KBM-7 (cell line): ENCODE measurements at regions of chr3 and their contacts with region 1.

Region 1: DNA sequence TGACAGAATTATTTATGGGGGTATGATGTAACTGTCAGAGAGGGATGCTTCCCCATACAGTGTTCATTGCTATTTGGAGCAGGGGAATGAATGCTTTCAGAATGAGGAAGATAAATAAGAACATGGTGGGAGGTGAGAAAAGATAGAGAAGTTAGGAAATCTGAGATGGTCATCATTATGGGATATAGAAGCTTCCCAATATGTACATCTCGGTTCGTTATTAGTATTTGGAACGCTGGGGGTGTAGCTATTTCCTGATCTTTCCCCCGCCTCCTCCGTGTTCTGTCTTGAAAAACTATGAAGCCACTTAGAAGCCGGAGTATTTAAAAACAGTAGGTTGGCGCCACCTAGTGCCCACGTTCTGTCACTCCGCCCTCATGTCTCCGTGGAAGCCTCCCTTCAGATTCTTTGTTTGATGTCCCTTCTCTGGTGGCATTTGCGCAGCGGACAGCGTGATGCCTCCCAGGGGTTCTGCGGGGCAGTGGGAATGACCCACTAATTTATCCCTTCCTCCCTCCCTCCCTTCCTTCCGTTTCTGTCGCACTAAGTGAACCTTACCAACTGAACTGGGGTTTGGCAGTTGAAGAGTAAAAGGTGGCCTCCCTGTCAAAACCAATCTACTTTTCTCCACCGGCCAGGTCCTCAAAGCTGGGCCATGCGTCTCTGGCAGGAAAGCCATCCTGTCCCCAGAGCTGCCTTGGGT is 184.5 kb downstream of the FEZF2 start:
- DNase-seq: peak; percentile 82

Region 2: DNA sequence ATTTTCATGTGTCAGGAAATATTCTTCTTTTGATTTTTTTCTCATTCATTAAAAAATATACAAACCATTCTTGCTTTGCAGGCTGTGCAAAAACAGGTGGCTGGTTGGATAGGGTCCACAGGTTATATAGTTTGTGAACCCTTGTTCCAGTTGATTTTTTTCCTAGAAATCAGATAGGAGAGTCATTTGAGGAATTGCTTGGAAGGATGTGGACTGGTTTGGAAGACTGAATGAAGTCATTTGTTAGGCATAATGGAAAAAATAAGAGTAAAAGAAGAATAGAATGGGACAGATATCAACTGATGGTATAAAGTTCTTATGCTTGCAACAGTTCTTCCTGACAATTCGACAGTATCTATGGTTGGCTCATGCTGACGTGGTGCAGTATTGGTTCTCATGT is 438.1 kb before region 1 on chr3:
- in situ Hi-C with region 1: no loop called
- DNase-seq: no peak

Region 3: DNA sequence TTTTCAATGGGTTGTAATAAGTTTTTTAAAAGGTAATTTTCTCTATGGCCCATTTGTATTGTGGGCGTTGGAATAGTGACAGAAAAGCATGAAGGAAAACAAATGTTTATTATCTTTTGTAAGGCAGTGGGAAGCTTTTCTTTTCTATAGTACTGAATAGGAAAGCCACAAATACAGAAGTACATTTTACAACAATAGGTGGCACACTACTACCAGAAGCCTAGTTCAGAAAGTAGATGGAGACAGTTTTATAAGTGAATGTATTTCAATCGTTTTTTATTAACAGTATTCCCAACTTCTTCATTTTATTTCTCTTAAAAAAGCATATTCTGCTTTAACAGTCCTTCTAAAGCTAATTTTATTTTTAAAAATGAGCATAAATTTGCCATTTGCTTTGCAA is 330.8 kb before region 1 on chr3:
- in situ Hi-C with region 1: loop called (anchors 25 kb)
- DNase-seq: peak; percentile 37

Region 4: GRCh38 chr3:62318750-62319569 is 130.1 kb after region 1 on chr3:
- in situ Hi-C with region 1: no loop called
- DNase-seq: peak; percentile 37